AG04450 (cell line): ENCODE measurements at regions of chr19 and their contacts with region 1.

Region 1: GRCh38 chr19:2475702-2476450 is at the start of gene GADD45B:
- DNase-seq: peak; percentile 97
- H3K4me3 ChIP-seq: peak within 1 kb of the TSS; percentile 94
- H3K27ac ChIP-seq: peak within 1 kb of the TSS; percentile 77
- H3K27me3 ChIP-seq: no peaks in the 10 kb centered on the region
- CTCF ChIP-seq: no peak
- polyA plus RNA-seq, gene GADD45B: 18.5 and 24.8 TPM in 2 replicates

Region 2: DNA sequence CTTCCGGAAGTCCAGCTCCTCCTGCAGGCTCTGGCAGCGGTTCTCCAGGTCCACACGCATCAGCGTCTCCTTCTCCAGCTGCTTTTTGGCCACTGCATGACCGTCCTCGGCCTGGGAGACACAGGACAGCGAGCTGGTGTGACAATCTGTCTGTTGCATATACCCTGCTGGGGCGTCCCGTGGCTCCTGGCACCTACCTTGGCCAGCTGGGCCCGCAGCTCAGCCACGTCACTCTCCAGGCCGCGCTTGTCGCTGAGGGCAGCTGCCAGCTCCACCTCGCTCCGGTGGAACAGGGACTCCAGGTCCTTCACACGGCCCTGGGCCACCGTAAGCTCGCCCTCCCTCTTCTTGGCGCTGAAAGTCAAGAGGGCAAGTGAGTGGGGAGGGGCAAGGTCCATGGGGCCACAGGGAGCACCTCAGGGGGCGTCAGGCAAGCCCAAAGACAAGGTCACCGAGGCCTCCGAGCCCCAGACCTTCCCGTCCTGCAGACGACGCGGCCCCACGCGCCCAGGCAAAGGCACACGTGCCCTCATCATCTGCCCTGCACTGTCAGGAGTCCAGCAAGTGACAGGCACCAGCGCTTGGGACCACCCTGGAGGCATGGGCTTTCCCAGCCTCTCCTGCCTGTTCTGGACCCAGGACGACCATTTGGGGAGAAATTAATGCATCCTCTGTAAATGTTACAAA is 37.6 kb before region 1 on chr19:
- CTCF ChIA-PET with region 1: no interaction called
- POLR2A ChIA-PET with region 1: interaction called, 11 read pairs
- DNase-seq: no peak
- H3K4me3 ChIP-seq: no peak overlapping the region
- H3K27ac ChIP-seq: no peak overlapping the region
- H3K27me3 ChIP-seq: no peaks in the 10 kb centered on the region
- CTCF ChIP-seq: no peak

Region 3: DNA sequence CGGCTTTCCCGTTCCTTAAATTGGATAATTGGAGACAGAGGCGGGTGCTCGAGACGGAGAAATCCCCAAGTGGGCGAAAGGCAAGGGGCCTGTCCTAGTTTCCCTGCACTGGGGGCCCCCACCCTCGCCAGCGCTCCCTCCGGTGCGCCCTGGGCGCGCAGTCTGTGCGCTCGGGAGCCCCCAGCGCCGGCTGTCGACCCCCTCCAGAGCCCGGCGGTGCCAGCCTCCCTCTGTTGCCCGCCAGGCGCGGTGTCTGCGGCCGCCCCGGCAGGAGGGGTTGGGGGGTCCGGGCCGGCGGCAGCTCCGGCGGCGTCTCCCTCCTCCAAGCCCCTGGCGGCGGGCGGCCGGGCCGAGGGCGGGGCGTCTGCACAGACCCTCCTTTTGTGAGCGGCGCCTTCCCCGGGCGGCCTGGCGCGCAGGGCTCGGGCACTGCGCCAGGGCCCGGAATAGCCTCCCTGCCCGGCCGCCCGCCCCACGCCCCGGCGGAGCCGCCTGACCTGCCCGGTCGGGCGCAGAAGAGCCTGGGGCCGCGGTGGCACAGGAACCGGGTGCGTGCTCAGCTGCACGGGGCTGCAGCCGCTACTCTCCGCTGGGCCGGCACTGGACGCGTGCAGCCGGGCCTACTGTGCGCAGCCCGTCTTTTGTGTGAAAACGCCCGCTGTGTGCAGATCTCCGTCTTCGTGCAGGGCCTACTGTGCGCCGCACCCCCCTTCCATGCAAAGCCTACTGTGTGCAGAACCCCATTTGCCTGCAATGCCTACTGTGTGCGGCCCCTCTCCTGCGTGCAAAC is 13.3 kb after region 1 on chr19:
- CTCF ChIA-PET with region 1: no interaction called
- POLR2A ChIA-PET with region 1: interaction called, 75 read pairs
- DNase-seq: no peak
- H3K4me3 ChIP-seq: peak overlapping the region; percentile 44
- H3K27ac ChIP-seq: no peak overlapping the region
- H3K27me3 ChIP-seq: no peaks in the 10 kb centered on the region
- CTCF ChIP-seq: no peak

Region 4: DNA sequence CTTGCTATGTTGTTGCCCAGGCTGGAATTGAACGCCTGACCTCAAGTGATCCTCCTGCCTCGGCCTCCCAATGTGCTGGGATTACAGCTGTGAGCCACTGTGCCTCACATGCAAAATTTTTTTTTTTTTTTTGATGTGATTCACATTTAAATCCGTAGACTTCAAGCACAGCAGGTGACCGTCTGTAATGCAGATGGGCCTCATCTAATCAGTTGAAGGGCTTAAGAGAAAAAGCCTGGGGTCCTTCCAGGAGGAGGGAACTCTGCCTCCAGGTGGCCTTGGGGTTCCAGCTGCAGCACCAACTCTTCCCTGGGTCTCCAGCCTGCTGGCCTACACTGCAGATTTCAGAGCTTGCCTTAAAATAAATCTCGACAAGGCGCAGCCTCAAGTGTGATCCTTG is 43.6 kb after region 1 on chr19:
- CTCF ChIA-PET with region 1: interaction called, 3 read pairs
- POLR2A ChIA-PET with region 1: interaction called, 16 read pairs
- DNase-seq: no peak
- H3K4me3 ChIP-seq: no peak overlapping the region
- H3K27ac ChIP-seq: no peak overlapping the region
- H3K27me3 ChIP-seq: no peaks in the 10 kb centered on the region
- CTCF ChIP-seq: no peak

Region 5: DNA sequence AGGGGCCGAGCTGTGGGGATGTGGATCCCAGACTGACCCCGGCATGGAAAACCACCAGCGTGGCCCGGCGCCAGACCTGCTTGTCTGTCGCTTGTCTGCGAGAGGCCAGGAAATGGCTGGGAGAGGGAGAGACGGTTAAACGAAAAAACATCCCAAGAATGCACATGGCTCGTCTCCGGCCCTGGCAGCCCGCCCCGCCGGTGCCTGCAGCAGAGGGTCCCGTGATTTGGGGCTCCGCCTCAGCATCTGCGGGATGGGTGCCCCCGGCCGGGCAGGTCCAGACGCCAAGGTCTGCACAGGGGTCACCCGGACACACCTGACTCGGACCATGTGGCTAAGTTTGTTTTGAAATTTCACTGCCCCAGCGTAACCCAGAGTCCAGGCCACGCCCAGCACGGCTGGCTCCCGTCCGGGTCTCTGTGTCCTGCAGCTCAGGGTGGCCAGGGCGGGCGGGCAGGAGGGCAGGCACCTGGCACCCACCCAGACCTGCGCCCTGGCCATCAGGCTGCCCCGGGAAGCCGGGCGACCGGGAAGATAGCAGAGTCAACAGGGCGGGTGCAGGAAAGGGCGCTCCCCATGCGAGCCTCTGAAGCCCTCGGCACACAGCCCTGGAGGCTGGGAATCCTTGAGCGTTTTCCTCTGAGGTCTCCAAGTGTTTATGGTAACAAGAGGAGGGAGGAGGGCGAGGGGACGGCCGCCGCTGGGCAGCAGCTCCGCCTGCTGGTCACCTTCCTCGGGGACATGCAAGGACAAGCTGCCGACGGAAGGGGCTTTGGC is 103.2 kb after region 1 on chr19:
- CTCF ChIA-PET with region 1: interaction called, 20 read pairs
- POLR2A ChIA-PET with region 1: interaction called, 238 read pairs
- DNase-seq: peak; percentile 61
- H3K4me3 ChIP-seq: peak overlapping the region; percentile 64
- H3K27ac ChIP-seq: peak overlapping the region; percentile 75
- H3K27me3 ChIP-seq: no peaks in the 10 kb centered on the region
- CTCF ChIP-seq: peak; percentile 94

Region 6: GRCh38 chr19:2610637-2611482 is 135.0 kb after region 1 on chr19:
- CTCF ChIA-PET with region 1: interaction called, 29 read pairs
- POLR2A ChIA-PET with region 1: interaction called, 165 read pairs
- DNase-seq: peak; percentile 86
- H3K4me3 ChIP-seq: peak overlapping the region; percentile 50
- H3K27ac ChIP-seq: no peak overlapping the region
- H3K27me3 ChIP-seq: peaks cover 2% of the 10 kb centered on the region
- CTCF ChIP-seq: peak; percentile 97

Region 7: GRCh38 chr19:2636897-2637683 is 161.2 kb after region 1 on chr19:
- CTCF ChIA-PET with region 1: interaction called, 12 read pairs
- POLR2A ChIA-PET with region 1: interaction called, 15 read pairs
- DNase-seq: no peak
- H3K4me3 ChIP-seq: no peak overlapping the region
- H3K27ac ChIP-seq: no peak overlapping the region
- H3K27me3 ChIP-seq: peaks cover 14% of the 10 kb centered on the region
- CTCF ChIP-seq: peak; percentile 85